H1 (cell line): ENCODE measurements at regions of chr10 and their contacts with region 1.

Region 1: GRCh38 chr10:43265799-43266721 is 805 bp downstream of the RASGEF1A start:
- DNase-seq: peak in 1 of 2 experiments; percentile 60
- H3K4me3 ChIP-seq: peak overlapping the region; percentile 31 to 59 (median 42)
- H3K27ac ChIP-seq: no peak overlapping the region
- H3K4me1 ChIP-seq: peaks cover 0 to 12% (median 4%) of the 10 kb centered on the region in 4 experiments; a peak in 5 of 7 replicates
- H3K27me3 ChIP-seq: peaks cover 19 to 36% (median 35%) of the 10 kb centered on the region in 4 experiments
- CTCF ChIP-seq: peak in 2 of 3 experiments; percentile 57 to 59; a peak in 3 of 4 replicates
- EP300 ChIP-seq: no peak
- POLR2A ChIP-seq: no peak
- RAD21 ChIP-seq: peak; percentile 45 to 57; a peak in 3 of 4 replicates

Region 2: DNA sequence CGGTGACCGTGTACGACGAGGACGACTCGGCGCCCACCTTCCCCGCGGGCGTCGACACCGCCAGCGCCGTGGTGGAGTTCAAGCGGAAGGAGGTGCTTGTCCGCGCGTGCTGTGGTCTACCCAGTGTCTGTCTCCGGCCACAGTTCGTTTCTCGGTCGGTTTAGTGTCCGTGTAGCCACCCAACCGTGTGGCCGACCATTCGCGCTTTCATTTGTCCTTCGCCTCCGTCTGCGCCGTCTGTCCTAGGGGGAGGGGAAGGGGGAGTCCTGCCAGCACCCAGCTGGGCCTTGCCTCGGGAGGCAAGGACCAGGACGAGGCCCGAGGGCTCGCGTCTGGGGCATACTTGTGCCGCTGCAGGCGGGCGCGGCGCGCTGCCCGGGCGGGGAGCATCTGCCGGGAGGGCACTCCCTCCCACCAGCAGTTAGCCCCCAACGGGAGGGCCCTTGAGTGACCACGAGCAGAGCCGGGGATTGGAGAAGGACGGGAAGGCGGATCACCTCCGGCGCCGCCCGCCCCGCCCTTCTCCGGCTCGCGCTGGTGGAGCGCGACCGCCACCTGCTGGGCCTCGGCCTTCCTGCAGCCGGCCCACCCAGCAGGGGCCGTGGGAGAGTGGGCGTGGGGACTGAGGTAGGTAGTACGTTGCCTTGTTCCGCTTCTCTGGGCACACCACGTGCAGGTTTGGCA is 160.8 kb before region 1 on chr10:
- CTCF ChIA-PET with region 1: no interaction called
- POLR2A ChIA-PET with region 1: no interaction called
- DNase-seq: peak; percentile 75 to 94
- H3K4me3 ChIP-seq: peak overlapping the region; percentile 17 to 64 (median 58)
- H3K27ac ChIP-seq: no peak overlapping the region
- H3K4me1 ChIP-seq: peaks cover 0 to 13% (median 3%) of the 10 kb centered on the region in 4 experiments; a peak in 5 of 7 replicates
- H3K27me3 ChIP-seq: peaks cover 0 to 16% (median 12%) of the 10 kb centered on the region in 4 experiments; a peak in 6 of 7 replicates
- CTCF ChIP-seq: peak in 2 of 3 experiments; percentile 92 to 93; a peak in 3 of 4 replicates
- EP300 ChIP-seq: 0 out of 3 replicates have a peak, but pooled peaks of 1 of the 2 experiments have one; percentile 6
- POLR2A ChIP-seq: 0 out of 3 replicates have a peak, but pooled peaks of 1 of the 2 experiments have one; percentile 34
- RAD21 ChIP-seq: peak; percentile 96 to 98

Region 3: GRCh38 chr10:43229208-43230061 is 36.6 kb before region 1 on chr10:
- CTCF ChIA-PET with region 1: interaction called, 24 read pairs
- POLR2A ChIA-PET with region 1: no interaction called
- DNase-seq: peak in 1 of 2 experiments; percentile 85
- H3K4me3 ChIP-seq: peak overlapping the region; percentile 57 to 76 (median 59)
- H3K27ac ChIP-seq: no peak overlapping the region
- H3K4me1 ChIP-seq: peaks cover 0 to 14% (median 7%) of the 10 kb centered on the region in 4 experiments; a peak in 5 of 7 replicates
- H3K27me3 ChIP-seq: peaks cover 19 to 40% (median 39%) of the 10 kb centered on the region in 4 experiments
- CTCF ChIP-seq: no peak
- EP300 ChIP-seq: no peak
- POLR2A ChIP-seq: no peak
- RAD21 ChIP-seq: no peak

Region 4: GRCh38 chr10:43249962-43250614 is 16.0 kb before region 1 on chr10:
- CTCF ChIA-PET with region 1: interaction called, 14 read pairs
- POLR2A ChIA-PET with region 1: no interaction called
- DNase-seq: peak in 1 of 2 experiments; percentile 54
- H3K4me3 ChIP-seq: no peak overlapping the region
- H3K27ac ChIP-seq: no peak overlapping the region
- H3K4me1 ChIP-seq: peaks cover 0 to 15% (median 5%) of the 10 kb centered on the region in 4 experiments; a peak in 5 of 7 replicates
- H3K27me3 ChIP-seq: no peaks in the 10 kb centered on the region
- CTCF ChIP-seq: no peak
- EP300 ChIP-seq: no peak
- POLR2A ChIP-seq: no peak
- RAD21 ChIP-seq: no peak

Region 5: GRCh38 chr10:43255634-43256431 is 10.2 kb before region 1 on chr10:
- CTCF ChIA-PET with region 1: interaction called, 38 read pairs
- POLR2A ChIA-PET with region 1: no interaction called
- DNase-seq: peak in 1 of 2 experiments; percentile 75
- H3K4me3 ChIP-seq: no peak overlapping the region
- H3K27ac ChIP-seq: no peak overlapping the region
- H3K4me1 ChIP-seq: peaks cover 0 to 7% (median under 1%) of the 10 kb centered on the region in 4 experiments; a peak in 5 of 7 replicates
- H3K27me3 ChIP-seq: no peaks in the 10 kb centered on the region
- CTCF ChIP-seq: peak in 2 of 3 experiments; percentile 85 to 90; a peak in 3 of 4 replicates
- EP300 ChIP-seq: no peak
- POLR2A ChIP-seq: no peak
- RAD21 ChIP-seq: peak; percentile 65 to 74

Region 6: GRCh38 chr10:43278216-43278615 is 12.2 kb after region 1 on chr10:
- CTCF ChIA-PET with region 1: interaction called, 11 read pairs
- POLR2A ChIA-PET with region 1: interaction called, 3 read pairs
- DNase-seq: no peak
- H3K4me3 ChIP-seq: no peak overlapping the region
- H3K27ac ChIP-seq: no peak overlapping the region
- H3K4me1 ChIP-seq: peaks cover 0 to 5% (median 0%) of the 10 kb centered on the region in 4 experiments; a peak in 5 of 7 replicates
- H3K27me3 ChIP-seq: peaks cover 0 to 8% (median 3%) of the 10 kb centered on the region in 4 experiments; a peak in 2 of 7 replicates
- CTCF ChIP-seq: no peak
- EP300 ChIP-seq: no peak
- POLR2A ChIP-seq: no peak
- RAD21 ChIP-seq: no peak

Region 7: DNA sequence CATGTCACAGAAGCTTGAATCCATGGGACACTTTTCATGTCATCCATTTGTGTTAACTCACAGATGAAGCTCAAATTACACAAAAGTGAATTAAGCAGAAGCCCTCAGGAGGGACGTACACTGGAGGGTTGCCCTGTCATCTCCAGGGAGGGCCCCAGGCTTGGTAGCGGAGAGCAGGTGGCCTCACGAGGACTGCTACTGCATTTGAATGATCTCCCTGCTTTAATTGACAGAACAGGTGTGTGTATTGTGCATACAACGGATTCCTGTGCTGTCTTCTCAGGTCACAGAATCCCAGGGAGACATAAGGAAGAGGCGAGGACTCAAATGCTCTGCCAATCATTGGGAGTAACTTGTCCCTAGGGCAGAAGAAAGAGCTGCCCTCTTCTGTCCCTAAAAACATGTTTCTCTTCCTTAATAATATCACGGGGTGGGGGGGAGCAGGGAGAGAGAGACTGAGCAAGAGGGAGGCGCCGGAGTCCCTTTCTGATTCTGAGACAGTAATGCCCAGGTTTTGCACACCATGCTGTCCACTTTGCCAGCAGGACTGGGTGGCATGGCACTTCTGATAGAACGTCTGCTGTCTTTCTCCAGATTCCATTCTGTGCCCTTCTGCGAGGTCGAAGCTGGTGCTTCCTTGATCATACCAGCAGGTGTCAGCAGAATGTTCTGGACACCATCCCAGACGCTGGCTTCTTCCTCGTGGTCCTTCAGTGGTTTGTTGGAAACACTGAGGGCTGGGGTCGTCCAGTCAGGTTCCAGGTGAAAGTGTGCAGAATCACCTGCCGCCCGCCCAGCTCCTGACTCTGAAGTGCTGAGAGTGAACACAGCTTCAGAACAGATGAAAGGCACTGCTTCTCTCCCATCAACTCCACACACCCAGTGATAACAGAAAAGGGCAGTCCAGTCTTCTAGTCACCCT is 27.0 kb after region 1 on chr10:
- CTCF ChIA-PET with region 1: interaction called, 10 read pairs
- POLR2A ChIA-PET with region 1: no interaction called
- DNase-seq: no peak
- H3K4me3 ChIP-seq: no peak overlapping the region
- H3K27ac ChIP-seq: no peak overlapping the region
- H3K4me1 ChIP-seq: no peaks in the 10 kb centered on the region; a peak in 2 of 7 replicates
- H3K27me3 ChIP-seq: peaks cover 0 to 2% (median 0%) of the 10 kb centered on the region in 4 experiments; a peak in 1 of 7 replicates
- CTCF ChIP-seq: peak; percentile 73 to 82 (median 82)
- EP300 ChIP-seq: no peak
- POLR2A ChIP-seq: no peak
- RAD21 ChIP-seq: peak; percentile 85 to 89

Region 8: DNA sequence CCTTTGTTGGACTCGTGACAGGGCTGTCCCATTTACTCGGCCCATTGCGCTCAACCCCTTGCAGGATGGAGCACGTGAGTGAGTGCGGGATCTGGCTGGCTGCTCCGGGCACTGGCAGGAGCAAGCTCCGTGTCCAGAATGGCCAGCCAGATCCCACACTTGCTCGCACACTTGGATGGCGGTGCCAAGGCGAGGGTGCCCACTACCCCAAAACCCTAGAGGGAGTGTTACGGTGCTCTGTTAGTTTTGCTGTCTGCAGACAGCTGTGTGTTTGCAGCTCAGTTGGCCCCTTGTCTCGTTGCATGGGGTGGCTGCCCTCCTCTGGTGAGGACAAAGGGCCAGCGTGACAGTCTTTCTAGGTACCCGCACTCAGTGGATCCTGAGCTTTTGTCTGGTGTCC is 205.1 kb after region 1 on chr10:
- CTCF ChIA-PET with region 1: no interaction called
- POLR2A ChIA-PET with region 1: no interaction called
- DNase-seq: no peak
- H3K4me3 ChIP-seq: no peak overlapping the region
- H3K27ac ChIP-seq: no peak overlapping the region
- H3K4me1 ChIP-seq: no peaks in the 10 kb centered on the region; a peak in 1 of 7 replicates
- H3K27me3 ChIP-seq: no peaks in the 10 kb centered on the region
- CTCF ChIP-seq: no peak
- EP300 ChIP-seq: no peak
- POLR2A ChIP-seq: no peak
- RAD21 ChIP-seq: no peak